Activated CD4-positive, alpha-beta T cell treated with anti-CD3 and anti-CD28 coated beads, Interleukin-2, amount 10 ng/mL, durations not matched to agents 24 days and 14 days (primary cell): ENCODE measurements at regions of chr5 and their contacts with region 1.

Region 1: DNA sequence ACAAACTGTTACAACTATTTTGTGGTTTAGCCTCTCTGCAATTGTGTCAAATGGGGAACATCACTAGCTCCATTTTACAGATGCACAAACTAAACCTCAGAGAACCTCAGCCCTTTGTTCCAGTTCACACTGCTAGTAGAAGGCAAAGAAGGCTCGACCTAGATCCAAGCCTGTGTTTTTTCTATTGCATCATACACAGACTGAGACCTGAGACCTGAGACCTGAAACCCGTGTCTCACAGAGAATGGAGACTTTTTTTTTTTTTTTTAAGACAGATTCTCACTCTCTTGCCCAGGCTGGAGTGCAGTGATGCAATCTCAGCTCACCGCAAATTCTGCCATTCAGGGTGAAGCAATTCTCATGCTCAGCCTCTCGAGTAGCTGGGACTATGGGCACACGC is 120.8 kb downstream of the GALNT10 start:
- DNase-seq: no peak
- H3K4me3 Mint-ChIP-seq: no peak overlapping the region
- H3K27ac Mint-ChIP-seq: peak overlapping the region; percentile 14
- H3K4me1 Mint-ChIP-seq: peaks cover 29% of the 10 kb centered on the region
- H3K27me3 Mint-ChIP-seq: no peaks in the 10 kb centered on the region

Region 2: GRCh38 chr5:153222936-153223335 is 1088.4 kb before region 1 on chr5:
- intact Hi-C with region 1: no loop called
- DNase-seq: no peak
- H3K4me3 Mint-ChIP-seq: no peak overlapping the region
- H3K27ac Mint-ChIP-seq: no peak overlapping the region
- H3K4me1 Mint-ChIP-seq: no peaks in the 10 kb centered on the region
- H3K27me3 Mint-ChIP-seq: no peaks in the 10 kb centered on the region

Region 3: GRCh38 chr5:154276973-154277331 is 34.4 kb before region 1 on chr5:
- intact Hi-C with region 1: loop called (anchors 5 kb)
- DNase-seq: no peak
- H3K4me3 Mint-ChIP-seq: no peak overlapping the region
- H3K27ac Mint-ChIP-seq: peak overlapping the region; percentile 23
- H3K4me1 Mint-ChIP-seq: peaks cover 56% of the 10 kb centered on the region
- H3K27me3 Mint-ChIP-seq: no peaks in the 10 kb centered on the region

Region 4: GRCh38 chr5:154298065-154298464 is 13.3 kb before region 1 on chr5:
- intact Hi-C with region 1: no loop called
- DNase-seq: no peak
- H3K4me3 Mint-ChIP-seq: no peak overlapping the region
- H3K27ac Mint-ChIP-seq: no peak overlapping the region
- H3K4me1 Mint-ChIP-seq: peaks cover 2% of the 10 kb centered on the region
- H3K27me3 Mint-ChIP-seq: no peaks in the 10 kb centered on the region